ENCODE measurements at regions of chr6 and their contacts with region 1.

Region 1: DNA sequence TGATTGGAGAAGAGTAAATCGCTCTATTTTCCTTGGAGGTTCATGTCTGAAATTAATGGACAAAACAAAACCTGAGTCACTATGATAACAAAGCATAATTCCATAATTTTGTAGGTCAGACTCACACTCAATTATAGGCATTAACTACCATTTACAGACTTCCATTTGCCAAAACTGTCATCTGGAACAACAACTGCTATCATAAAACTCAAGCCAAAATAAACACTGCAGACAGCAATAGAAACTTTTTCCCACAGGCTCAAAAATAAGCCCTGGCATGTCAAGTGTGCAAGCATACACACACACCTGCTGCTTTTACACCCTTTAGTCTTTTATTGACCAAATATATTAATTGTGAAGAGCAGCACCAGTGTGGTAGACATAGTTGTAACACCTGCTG is 7.1 kb downstream of the MRPS10 start:
- DNase-seq: no peak
- ATAC-seq: no peak
- H3K4me3 ChIP-seq: no peak overlapping the region
- H3K4me3 Mint-ChIP-seq: no peak overlapping the region
- H3K27ac ChIP-seq: no peak overlapping the region
- H3K27ac Mint-ChIP-seq: no peak overlapping the region
- H3K4me1 ChIP-seq: peaks cover 8% of the 10 kb centered on the region
- H3K4me1 Mint-ChIP-seq: peaks cover 10% of the 10 kb centered on the region
- H3K27me3 ChIP-seq: no peaks in the 10 kb centered on the region
- H3K27me3 Mint-ChIP-seq: no peaks in the 10 kb centered on the region
- CTCF ChIP-seq: no peak

Region 2: DNA sequence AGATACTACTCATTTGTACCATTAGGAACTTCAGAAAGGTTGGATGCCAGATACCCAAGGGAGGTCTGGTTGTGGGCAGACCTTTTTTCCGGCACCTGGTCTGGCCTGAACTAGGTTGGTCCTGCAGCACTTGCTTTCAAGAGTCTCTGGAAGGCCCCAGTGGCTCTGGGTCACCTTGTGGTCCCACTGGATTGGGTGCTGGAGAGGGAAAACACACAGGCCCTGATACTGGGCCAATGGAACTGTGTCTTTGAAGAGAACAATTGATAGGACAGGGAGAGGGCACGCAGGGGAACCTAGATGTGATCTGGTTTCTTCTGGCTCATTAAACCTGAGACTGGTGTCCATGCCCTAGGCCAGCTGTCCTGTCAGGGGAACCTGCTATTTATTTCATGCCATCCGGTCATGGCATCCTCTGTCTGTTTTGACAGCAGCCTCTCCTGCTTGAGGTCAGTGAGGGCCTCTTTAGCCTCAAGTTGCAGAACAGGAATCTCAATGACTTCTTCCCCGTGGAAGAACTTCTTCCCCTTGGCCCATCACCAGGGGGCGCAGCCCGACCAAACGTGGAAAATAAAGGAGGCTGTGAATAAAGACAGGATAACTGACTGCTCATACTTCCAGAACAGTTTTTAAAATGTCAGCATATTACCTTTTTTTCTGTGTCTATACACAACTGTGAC is 135.3 kb before region 1 on chr6:
- CTCF ChIA-PET with region 1: no interaction called
- POLR2A ChIA-PET with region 1: no interaction called
- intact Hi-C with region 1: loop called in 1 of 2 experiments (anchors 5 kb)
- DNase-seq: peak; percentile 21 to 69 (median 42)
- ATAC-seq: no peak
- H3K4me3 ChIP-seq: no peak overlapping the region
- H3K4me3 Mint-ChIP-seq: no peak overlapping the region
- H3K27ac ChIP-seq: no peak overlapping the region
- H3K27ac Mint-ChIP-seq: no peak overlapping the region
- H3K4me1 ChIP-seq: peaks cover 2% of the 10 kb centered on the region
- H3K4me1 Mint-ChIP-seq: peaks cover 6% of the 10 kb centered on the region
- H3K27me3 ChIP-seq: no peaks in the 10 kb centered on the region
- H3K27me3 Mint-ChIP-seq: no peaks in the 10 kb centered on the region
- CTCF ChIP-seq: peak; percentile 69

Region 3: DNA sequence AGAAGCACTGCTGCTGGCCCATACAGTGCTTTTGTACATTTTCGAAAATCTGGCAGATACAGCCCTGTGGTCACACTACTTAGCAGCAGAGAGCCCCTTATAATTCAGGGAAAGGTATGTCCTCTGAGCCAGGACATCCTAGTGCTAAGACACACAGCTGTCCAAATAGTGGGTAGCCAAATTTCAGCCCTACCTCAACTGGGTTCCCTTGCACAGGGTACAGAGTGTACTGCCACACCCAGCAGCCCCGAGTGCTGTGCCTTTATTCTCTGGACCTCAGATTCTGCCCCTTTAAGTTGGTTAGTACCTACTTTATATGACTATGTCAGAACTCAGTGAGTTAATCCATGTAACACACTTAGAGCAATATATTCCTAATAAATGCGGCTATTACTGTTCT is 464.2 kb after region 1 on chr6:
- CTCF ChIA-PET with region 1: no interaction called
- POLR2A ChIA-PET with region 1: no interaction called
- intact Hi-C with region 1: no loop called
- DNase-seq: no peak
- ATAC-seq: no peak
- H3K4me3 ChIP-seq: no peak overlapping the region
- H3K4me3 Mint-ChIP-seq: no peak overlapping the region
- H3K27ac ChIP-seq: no peak overlapping the region
- H3K27ac Mint-ChIP-seq: no peak overlapping the region
- H3K4me1 ChIP-seq: no peaks in the 10 kb centered on the region
- H3K4me1 Mint-ChIP-seq: no peaks in the 10 kb centered on the region
- H3K27me3 ChIP-seq: no peaks in the 10 kb centered on the region
- H3K27me3 Mint-ChIP-seq: no peaks in the 10 kb centered on the region
- CTCF ChIP-seq: no peak

Measured in CD4-positive, alpha-beta T cell (primary cell).